Ascending aorta (tissue), 2 donors: ENCODE measurements at regions of chr17 and their contacts with region 1.

Region 1: GRCh38 chr17:82205719-82206508 is 6.7 kb downstream of the CCDC57 start:
- DNase-seq: peak; percentile 59 to 92
- H3K4me3 ChIP-seq: peak overlapping the region in 1 of 2 donors; percentile 6
- H3K27ac ChIP-seq: peak overlapping the region in 1 of 2 donors; percentile 32
- H3K4me1 ChIP-seq: peaks cover 0 to 7% of the 10 kb centered on the region in 2 donors
- H3K27me3 ChIP-seq: no peaks in the 10 kb centered on the region
- CTCF ChIP-seq: peak; percentile 86 to 94 (median 92)

Region 2: GRCh38 chr17:82236142-82236981 is 30.4 kb after region 1 on chr17:
- intact Hi-C with region 1: loop called (anchors 5 kb)
- DNase-seq: no peak
- H3K4me3 ChIP-seq: no peak overlapping the region
- H3K27ac ChIP-seq: peak overlapping the region in 1 of 2 donors; percentile 49
- H3K4me1 ChIP-seq: peaks cover 33 to 37% of the 10 kb centered on the region in 2 donors
- H3K27me3 ChIP-seq: no peaks in the 10 kb centered on the region
- CTCF ChIP-seq: peak; percentile 84 to 87 (median 85)

Region 3: GRCh38 chr17:82320956-82321927 is 115.3 kb after region 1 on chr17:
- intact Hi-C with region 1: loop called (anchors 1 kb)
- DNase-seq: no peak
- H3K4me3 ChIP-seq: no peak overlapping the region
- H3K27ac ChIP-seq: no peak overlapping the region
- H3K4me1 ChIP-seq: peaks cover 0 to 5% of the 10 kb centered on the region in 2 donors
- H3K27me3 ChIP-seq: peaks cover 7% of the 10 kb centered on the region
- CTCF ChIP-seq: peak; percentile 95 to 96 (median 96)